ENCODE measurements at regions of chr4 and their contacts with region 1.

Region 1: DNA sequence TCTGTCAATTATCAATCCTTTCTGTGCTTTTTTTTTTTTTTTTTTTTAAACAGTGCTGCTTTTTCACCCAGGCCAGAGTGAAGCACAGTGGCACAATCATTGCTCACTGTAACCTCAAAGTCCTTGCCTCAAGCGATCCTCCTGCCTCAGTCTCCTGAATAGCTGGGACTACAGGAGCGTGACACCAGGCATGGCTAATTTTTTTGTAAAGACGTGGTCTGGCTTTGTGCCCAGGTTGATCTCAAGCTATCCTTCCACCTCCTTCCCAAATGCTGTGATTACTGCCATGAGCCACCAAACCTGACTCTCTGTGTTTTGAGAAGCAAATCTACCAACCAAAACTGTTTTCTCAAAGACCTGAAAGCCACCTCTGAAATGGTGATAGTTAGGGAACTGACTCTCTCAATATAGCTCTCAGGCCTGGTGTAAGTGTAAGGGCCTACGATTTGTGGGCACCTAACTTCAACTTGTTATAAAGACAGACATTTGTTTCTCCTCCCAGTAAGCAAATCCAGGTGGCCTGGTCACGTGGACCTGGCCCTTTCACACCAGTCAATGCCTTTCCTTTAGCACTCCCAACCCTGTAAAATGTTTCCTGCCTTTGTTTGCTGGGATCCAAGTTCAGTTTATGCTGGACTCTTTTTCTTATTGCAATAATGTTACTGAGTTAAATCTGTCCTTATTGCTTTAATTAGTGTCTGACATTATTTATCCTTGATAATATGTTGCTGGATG is 2015.9 kb downstream of the PCDH7 start:
- DNase-seq: no peak
- ATAC-seq: no peak
- H3K4me3 ChIP-seq: no peak overlapping the region
- H3K4me3 Mint-ChIP-seq: no peak overlapping the region
- H3K27ac ChIP-seq: no peak overlapping the region
- H3K27ac Mint-ChIP-seq: no peak overlapping the region
- H3K4me1 ChIP-seq: no peaks in the 10 kb centered on the region
- H3K4me1 Mint-ChIP-seq: no peaks in the 10 kb centered on the region
- H3K27me3 ChIP-seq: no peaks in the 10 kb centered on the region
- H3K27me3 Mint-ChIP-seq: no peaks in the 10 kb centered on the region
- CTCF ChIP-seq: no peak

Region 2: DNA sequence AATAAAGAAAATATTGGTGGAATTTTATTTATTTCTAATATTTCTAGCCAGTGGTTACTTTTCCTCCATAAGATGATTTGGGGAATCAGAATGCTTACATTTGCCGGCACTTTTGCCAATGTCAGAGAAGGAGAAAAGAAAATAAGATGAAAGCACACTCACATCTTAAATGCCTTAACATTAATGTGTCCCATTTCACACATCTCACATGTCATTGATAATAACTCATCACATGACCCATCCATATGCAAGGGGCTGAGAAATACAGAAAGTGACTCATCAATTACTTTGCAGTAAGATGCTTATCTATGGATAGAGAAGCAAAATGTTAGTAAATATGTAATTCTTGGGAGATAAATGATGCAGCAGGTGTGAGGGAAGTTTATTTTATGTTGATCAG is 484.9 kb before region 1 on chr4:
- CTCF ChIA-PET with region 1: no interaction called
- POLR2A ChIA-PET with region 1: no interaction called
- intact Hi-C with region 1: no loop called
- DNase-seq: no peak
- ATAC-seq: no peak
- H3K4me3 ChIP-seq: no peak overlapping the region
- H3K4me3 Mint-ChIP-seq: no peak overlapping the region
- H3K27ac ChIP-seq: no peak overlapping the region
- H3K27ac Mint-ChIP-seq: no peak overlapping the region
- H3K4me1 ChIP-seq: no peaks in the 10 kb centered on the region
- H3K4me1 Mint-ChIP-seq: no peaks in the 10 kb centered on the region
- H3K27me3 ChIP-seq: no peaks in the 10 kb centered on the region
- H3K27me3 Mint-ChIP-seq: no peaks in the 10 kb centered on the region
- CTCF ChIP-seq: no peak

Region 3: DNA sequence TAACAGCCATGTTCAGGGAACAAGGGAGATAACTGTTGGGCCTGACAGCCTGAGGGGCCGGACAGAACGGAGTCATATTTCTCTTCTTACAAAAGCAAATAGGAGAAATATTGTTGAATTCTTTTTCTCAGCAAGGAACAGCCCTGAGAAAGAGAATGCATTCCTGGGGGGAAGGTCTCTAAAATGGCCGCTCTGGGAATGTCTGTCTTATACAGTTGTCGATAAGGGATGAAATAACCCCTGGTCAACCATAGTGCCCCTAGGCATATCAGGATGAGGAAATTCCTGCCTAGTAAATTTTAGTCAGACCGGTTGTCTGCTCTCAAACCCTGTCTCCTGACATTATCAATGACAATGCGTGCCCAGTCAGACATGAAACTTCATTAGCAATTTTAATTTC is 90.4 kb before region 1 on chr4:
- CTCF ChIA-PET with region 1: no interaction called
- POLR2A ChIA-PET with region 1: no interaction called
- intact Hi-C with region 1: no loop called
- DNase-seq: no peak
- ATAC-seq: no peak
- H3K4me3 ChIP-seq: no peak overlapping the region
- H3K4me3 Mint-ChIP-seq: no peak overlapping the region
- H3K27ac ChIP-seq: no peak overlapping the region
- H3K27ac Mint-ChIP-seq: no peak overlapping the region
- H3K4me1 ChIP-seq: no peaks in the 10 kb centered on the region
- H3K4me1 Mint-ChIP-seq: no peaks in the 10 kb centered on the region
- H3K27me3 ChIP-seq: no peaks in the 10 kb centered on the region
- H3K27me3 Mint-ChIP-seq: no peaks in the 10 kb centered on the region
- CTCF ChIP-seq: no peak

Region 4: DNA sequence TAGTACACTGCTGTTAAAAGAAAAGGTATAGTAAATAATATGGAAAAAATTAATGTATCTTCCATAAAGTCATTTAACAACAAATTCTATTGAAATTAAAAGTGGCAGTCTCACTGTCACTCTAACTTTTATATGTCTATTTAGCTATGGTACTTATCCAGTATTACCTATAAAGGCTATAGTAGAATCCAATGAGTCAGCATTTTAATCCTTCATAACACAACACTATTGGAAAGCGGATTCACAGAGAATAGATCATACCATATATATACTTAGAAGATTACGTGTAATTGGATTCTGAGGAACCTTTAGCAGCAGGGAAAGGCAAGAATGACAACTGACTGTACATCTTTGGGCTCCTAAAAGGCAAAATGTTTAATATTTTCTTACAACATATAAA is 73.2 kb before region 1 on chr4:
- CTCF ChIA-PET with region 1: no interaction called
- POLR2A ChIA-PET with region 1: no interaction called
- intact Hi-C with region 1: no loop called
- DNase-seq: no peak
- ATAC-seq: no peak
- H3K4me3 ChIP-seq: no peak overlapping the region
- H3K4me3 Mint-ChIP-seq: no peak overlapping the region
- H3K27ac ChIP-seq: no peak overlapping the region
- H3K27ac Mint-ChIP-seq: no peak overlapping the region
- H3K4me1 ChIP-seq: no peaks in the 10 kb centered on the region
- H3K4me1 Mint-ChIP-seq: no peaks in the 10 kb centered on the region
- H3K27me3 ChIP-seq: no peaks in the 10 kb centered on the region
- H3K27me3 Mint-ChIP-seq: no peaks in the 10 kb centered on the region
- CTCF ChIP-seq: no peak

Region 5: DNA sequence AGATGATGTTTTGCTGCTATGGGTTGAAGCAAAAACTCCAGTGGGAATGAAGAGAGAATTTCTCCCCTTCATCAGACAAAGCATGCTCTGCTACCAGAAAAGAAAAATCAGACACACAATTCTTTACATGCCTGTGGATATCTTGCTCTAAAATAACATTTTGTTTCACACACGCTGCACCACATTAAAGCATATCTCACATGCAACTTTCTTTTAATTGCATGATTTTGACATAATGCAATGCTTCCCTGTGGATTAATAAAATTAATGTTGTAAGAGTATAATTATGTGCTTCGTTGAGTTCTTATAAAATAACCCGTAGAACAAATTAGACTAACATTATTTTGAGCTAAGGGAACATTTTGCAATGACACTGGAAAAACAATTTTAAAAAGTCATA is 214.8 kb after region 1 on chr4:
- CTCF ChIA-PET with region 1: no interaction called
- POLR2A ChIA-PET with region 1: no interaction called
- intact Hi-C with region 1: loop called in 1 of 2 experiments (anchors 10 kb)
- DNase-seq: no peak
- ATAC-seq: no peak
- H3K4me3 ChIP-seq: no peak overlapping the region
- H3K4me3 Mint-ChIP-seq: no peak overlapping the region
- H3K27ac ChIP-seq: no peak overlapping the region
- H3K27ac Mint-ChIP-seq: no peak overlapping the region
- H3K4me1 ChIP-seq: no peaks in the 10 kb centered on the region
- H3K4me1 Mint-ChIP-seq: no peaks in the 10 kb centered on the region
- H3K27me3 ChIP-seq: no peaks in the 10 kb centered on the region
- H3K27me3 Mint-ChIP-seq: no peaks in the 10 kb centered on the region
- CTCF ChIP-seq: no peak

Measured in CD8-positive, alpha-beta T cell (primary cell).